ENCODE measurements at regions of chr17 and their contacts with region 1.

Region 1: GRCh38 chr17:8785547-8786413 is 13.4 kb downstream of the MFSD6L start:
- DNase-seq: peak; percentile 69 to 72
- ATAC-seq: peak; percentile 87 to 98
- H3K4me3 ChIP-seq: no peak overlapping the region
- H3K27ac ChIP-seq: no peak overlapping the region
- H3K4me1 ChIP-seq: no peaks in the 10 kb centered on the region
- CTCF ChIP-seq: peak; percentile 85
- EP300 ChIP-seq: no peak
- POLR2A ChIP-seq: no peak
- RAD21 ChIP-seq: peak; percentile 88 to 91

Region 2: GRCh38 chr17:8606401-8606800 is 179.4 kb before region 1 on chr17:
- CTCF ChIA-PET with region 1: no interaction called
- POLR2A ChIA-PET with region 1: no interaction called
- DNase-seq: no peak
- ATAC-seq: no peak
- H3K4me3 ChIP-seq: no peak overlapping the region
- H3K27ac ChIP-seq: no peak overlapping the region
- H3K4me1 ChIP-seq: no peaks in the 10 kb centered on the region
- CTCF ChIP-seq: no peak
- EP300 ChIP-seq: no peak
- POLR2A ChIP-seq: no peak
- RAD21 ChIP-seq: no peak

Region 3: GRCh38 chr17:8662973-8663372 is 122.8 kb before region 1 on chr17:
- CTCF ChIA-PET with region 1: no interaction called
- POLR2A ChIA-PET with region 1: no interaction called
- DNase-seq: no peak
- ATAC-seq: no peak
- H3K4me3 ChIP-seq: no peak overlapping the region
- H3K27ac ChIP-seq: no peak overlapping the region
- H3K4me1 ChIP-seq: no peaks in the 10 kb centered on the region
- CTCF ChIP-seq: no peak
- EP300 ChIP-seq: no peak
- POLR2A ChIP-seq: no peak
- RAD21 ChIP-seq: no peak

Region 4: DNA sequence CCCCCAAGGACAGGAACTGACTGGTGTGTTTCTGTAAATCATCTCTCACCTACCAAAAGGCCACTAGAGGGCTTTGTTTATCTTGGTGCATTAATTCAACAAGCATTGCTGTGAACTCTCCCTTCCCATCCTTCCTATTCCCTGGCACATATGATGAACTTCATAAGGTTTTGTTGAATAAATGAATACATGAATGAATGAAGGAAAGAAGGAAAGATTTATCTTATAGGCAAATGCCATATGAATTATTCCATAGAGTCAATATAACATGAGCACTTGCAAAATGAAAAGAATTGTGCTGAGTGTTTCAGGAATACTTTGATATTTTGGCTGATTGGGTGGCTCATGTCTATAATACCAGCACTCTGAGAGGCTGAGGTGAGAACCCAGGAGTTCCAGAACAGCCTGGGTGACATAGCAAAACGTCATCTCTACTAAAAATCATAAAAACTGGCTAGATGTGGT is 31.8 kb before region 1 on chr17:
- CTCF ChIA-PET with region 1: interaction called, 45 read pairs
- POLR2A ChIA-PET with region 1: no interaction called
- DNase-seq: peak; percentile 64 to 65
- ATAC-seq: peak; percentile 84 to 89
- H3K4me3 ChIP-seq: no peak overlapping the region
- H3K27ac ChIP-seq: no peak overlapping the region
- H3K4me1 ChIP-seq: no peaks in the 10 kb centered on the region
- CTCF ChIP-seq: peak; percentile 66
- EP300 ChIP-seq: no peak
- POLR2A ChIP-seq: no peak
- RAD21 ChIP-seq: peak; percentile 41 to 53; a peak in 4 of 5 replicates

Region 5: DNA sequence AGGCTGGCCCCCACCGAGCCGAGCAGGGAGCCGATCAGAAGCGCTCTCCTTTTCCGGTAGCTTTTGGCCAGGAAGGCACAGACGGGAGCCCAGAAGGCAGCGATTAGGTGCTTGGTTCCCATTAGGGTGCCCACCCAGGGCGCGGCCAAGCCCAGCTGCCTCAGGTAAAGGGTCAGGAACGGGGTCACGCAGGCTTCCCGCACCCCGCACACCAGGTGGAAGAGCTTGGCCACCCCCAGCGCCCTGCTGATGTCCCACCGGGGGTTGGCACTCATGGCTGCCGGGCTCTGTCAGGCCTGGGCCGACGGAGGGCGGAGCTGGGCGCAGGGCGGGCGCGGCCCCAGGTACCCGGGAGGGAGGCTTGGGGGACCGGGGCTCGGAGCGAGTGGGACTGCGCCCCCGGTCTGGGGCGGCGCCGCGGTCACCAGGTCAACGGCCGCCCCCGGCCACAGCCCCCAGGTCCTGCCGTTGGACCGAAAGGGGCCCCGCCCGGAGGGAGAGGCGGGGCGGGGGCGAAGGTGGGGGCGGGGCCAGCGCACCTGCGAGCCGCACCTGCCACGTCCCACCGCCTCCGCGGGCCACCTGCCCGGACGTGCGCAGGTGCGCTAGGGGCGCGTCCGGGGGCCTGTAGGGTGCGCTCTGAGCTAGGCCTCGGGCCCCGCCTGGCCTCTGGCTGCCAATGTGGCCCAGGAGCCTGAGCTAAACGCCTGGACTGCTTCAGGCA is 13.2 kb after region 1 on chr17 and contains the start of gene MFSD6L:
- CTCF ChIA-PET with region 1: interaction called, 51 read pairs
- POLR2A ChIA-PET with region 1: no interaction called
- DNase-seq: no peak
- ATAC-seq: no peak
- H3K4me3 ChIP-seq: no peak within 1 kb of the TSS
- H3K27ac ChIP-seq: no peak within 1 kb of the TSS
- H3K4me1 ChIP-seq: no peaks in the 10 kb centered on the region
- CTCF ChIP-seq: no peak
- EP300 ChIP-seq: no peak
- POLR2A ChIP-seq: no peak
- RAD21 ChIP-seq: no peak
- polyA plus RNA-seq, gene MFSD6L: not detected in 2 replicates

Region 6: GRCh38 chr17:8806926-8807550 is 21.3 kb after region 1 on chr17:
- CTCF ChIA-PET with region 1: interaction called, 38 read pairs
- POLR2A ChIA-PET with region 1: no interaction called
- DNase-seq: no peak
- ATAC-seq: no peak
- H3K4me3 ChIP-seq: no peak overlapping the region
- H3K27ac ChIP-seq: no peak overlapping the region
- H3K4me1 ChIP-seq: no peaks in the 10 kb centered on the region
- CTCF ChIP-seq: no peak
- EP300 ChIP-seq: no peak
- POLR2A ChIP-seq: no peak
- RAD21 ChIP-seq: no peak

Measured in A549 (cell line).